H1 (cell line): ENCODE measurements at regions of chr7 and their contacts with region 1.

Region 1: DNA sequence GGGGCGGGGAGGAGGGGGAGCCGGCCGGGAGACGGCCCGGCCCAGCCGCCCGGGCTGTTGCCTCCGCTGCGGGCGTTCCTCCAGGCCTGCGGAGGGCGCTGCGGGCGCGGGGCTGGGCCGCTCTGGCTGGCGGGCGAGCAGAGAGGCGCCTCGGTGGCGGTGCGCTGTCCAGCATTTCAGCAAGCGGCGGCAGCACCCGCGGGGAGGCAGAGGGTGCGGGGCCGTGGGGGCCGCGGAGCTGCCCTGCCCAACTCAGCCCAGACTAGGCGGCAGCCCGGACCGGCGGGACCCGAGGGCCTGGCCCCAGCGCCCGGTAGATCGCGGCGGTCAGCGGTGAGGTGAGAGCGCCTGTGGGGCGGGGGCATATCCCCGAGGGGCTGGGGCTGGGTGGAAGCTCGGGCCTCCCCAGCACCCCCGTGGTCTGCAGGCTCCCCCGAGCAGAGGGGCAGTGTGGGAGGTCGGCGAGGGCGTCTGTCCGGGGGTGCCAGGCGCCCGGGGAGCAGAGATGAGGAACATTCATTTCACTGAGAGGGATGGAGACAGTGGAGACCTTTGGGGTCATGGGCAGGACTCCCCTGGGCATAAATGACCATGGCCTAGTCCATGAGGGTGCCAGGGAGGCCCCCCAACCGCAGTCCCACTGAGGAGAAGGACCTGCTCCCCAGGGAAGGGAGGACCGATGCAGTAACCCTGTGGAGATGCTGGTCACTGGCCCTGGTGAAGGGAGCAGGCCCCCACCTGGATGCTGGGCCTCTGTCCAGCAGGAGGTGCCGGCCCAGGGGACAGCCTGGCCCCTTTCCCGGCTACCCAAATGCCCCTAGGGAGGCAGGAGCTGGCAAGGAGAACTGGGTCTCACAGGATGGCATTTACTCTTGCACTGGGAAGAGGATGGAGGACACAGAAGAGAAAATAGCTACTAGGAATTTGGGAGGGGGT is at the start of gene SRRM3:
- DNase-seq: peak in 1 of 2 experiments; percentile 98
- H3K4me3 ChIP-seq: peak within 1 kb of the TSS; percentile 26 to 71 (median 46)
- H3K27ac ChIP-seq: no peak within 1 kb of the TSS
- H3K4me1 ChIP-seq: peaks cover 0 to 8% (median 6%) of the 10 kb centered on the region in 4 experiments; a peak in 5 of 7 replicates
- H3K27me3 ChIP-seq: 0 out of 7 replicates have a peak, but pooled peaks cover 0 to 2% (median 0%) of the 10 kb centered on the region in 4 experiments
- CTCF ChIP-seq: peak; percentile 80 to 89 (median 87)
- EP300 ChIP-seq: peak in 1 of 2 experiments; percentile 83; a peak in 1 of 3 replicates
- POLR2A ChIP-seq: no peak
- RAD21 ChIP-seq: peak; percentile 25 to 57; a peak in 3 of 4 replicates
- total RNA-seq, gene SRRM3: 16.0 and 17.4 TPM in 2 replicates

Region 2: DNA sequence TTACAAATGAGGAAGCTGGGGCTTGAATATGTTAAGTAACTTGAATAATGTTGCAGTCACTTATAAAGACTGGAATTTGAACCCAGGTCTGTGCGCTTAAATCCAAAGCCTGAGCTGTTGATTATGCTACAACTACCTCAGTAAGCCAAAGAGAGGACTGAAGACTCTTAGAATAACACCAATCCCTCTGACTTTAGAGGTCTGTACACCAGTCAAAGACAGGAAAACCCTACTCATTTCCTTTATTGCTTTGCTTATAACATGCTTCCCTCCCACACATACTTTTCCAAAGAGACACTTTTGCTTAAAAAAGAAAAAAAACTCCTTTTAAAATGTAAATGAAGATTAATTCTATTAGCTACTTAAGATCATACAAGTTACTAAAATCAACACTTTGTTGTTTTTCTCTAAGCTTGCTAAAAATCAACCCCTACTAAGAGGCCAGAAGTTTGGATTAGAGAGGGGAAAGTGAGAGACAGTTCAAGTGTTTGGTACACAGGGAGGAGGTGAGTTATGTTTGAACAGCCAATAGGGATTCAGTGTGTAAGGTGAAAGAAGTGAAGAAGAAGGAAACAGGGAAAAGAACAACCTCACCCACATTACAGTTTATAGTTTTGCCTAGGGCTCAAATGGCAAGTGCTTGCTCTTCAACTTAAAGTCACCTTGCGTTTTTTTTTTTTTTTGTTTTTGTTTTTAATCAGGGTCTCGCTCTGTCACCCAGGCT is 79.3 kb before region 1 on chr7:
- CTCF ChIA-PET with region 1: no interaction called
- POLR2A ChIA-PET with region 1: no interaction called
- DNase-seq: no peak
- H3K4me3 ChIP-seq: no peak overlapping the region
- H3K27ac ChIP-seq: no peak overlapping the region
- H3K4me1 ChIP-seq: no peaks in the 10 kb centered on the region
- H3K27me3 ChIP-seq: no peaks in the 10 kb centered on the region
- CTCF ChIP-seq: no peak
- EP300 ChIP-seq: no peak
- POLR2A ChIP-seq: no peak
- RAD21 ChIP-seq: no peak

Region 3: GRCh38 chr7:76191783-76192275 is 10.2 kb before region 1 on chr7:
- CTCF ChIA-PET with region 1: interaction called, 50 read pairs
- POLR2A ChIA-PET with region 1: interaction called, 3 read pairs
- DNase-seq: peak; percentile 34 to 71
- H3K4me3 ChIP-seq: no peak overlapping the region
- H3K27ac ChIP-seq: no peak overlapping the region
- H3K4me1 ChIP-seq: peaks cover 0 to 7% (median 4%) of the 10 kb centered on the region in 4 experiments; a peak in 5 of 7 replicates
- H3K27me3 ChIP-seq: no peaks in the 10 kb centered on the region
- CTCF ChIP-seq: no peak
- EP300 ChIP-seq: no peak
- POLR2A ChIP-seq: peak in 1 of 2 experiments; percentile 46; a peak in 1 of 3 replicates
- RAD21 ChIP-seq: no peak

Region 4: DNA sequence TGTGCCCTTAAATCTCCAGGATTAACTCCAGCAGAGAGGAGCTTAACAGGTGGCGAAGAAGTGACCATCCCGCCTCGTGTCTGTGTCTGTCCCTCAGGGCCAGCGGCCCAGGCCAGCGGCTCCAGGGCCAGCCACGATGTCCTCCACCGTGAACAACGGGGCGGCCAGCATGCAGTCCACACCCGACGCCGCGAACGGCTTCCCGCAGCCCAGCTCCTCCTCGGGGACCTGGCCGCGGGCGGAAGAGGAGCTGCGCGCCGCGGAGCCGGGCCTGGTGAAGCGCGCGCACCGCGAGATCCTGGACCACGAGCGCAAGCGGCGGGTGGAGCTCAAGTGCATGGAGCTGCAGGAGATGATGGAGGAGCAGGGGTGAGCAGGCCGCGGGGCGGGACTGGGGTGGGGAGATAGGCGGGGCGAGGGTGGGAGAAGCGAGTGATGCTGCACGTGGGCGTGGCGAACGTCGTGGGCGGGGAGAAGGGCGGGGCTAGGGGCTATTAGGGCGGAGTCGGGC is 33.0 kb after region 1 on chr7:
- CTCF ChIA-PET with region 1: interaction called, 33 read pairs
- POLR2A ChIA-PET with region 1: interaction called, 5 read pairs
- DNase-seq: peak; percentile 79 to 99
- H3K4me3 ChIP-seq: peak overlapping the region; percentile 38 to 67 (median 47)
- H3K27ac ChIP-seq: peak overlapping the region; percentile 37; the same call in 1 of the 2 replicates
- H3K4me1 ChIP-seq: peaks cover 6 to 41% (median 27%) of the 10 kb centered on the region in 4 experiments
- H3K27me3 ChIP-seq: no peaks in the 10 kb centered on the region; a peak in 1 of 7 replicates
- CTCF ChIP-seq: peak in 1 of 3 experiments; percentile 11; a peak in 1 of 4 replicates
- EP300 ChIP-seq: no peak
- POLR2A ChIP-seq: 0 out of 3 replicates have a peak, but pooled peaks of 1 of the 2 experiments have one; percentile 20
- RAD21 ChIP-seq: no peak

Region 5: DNA sequence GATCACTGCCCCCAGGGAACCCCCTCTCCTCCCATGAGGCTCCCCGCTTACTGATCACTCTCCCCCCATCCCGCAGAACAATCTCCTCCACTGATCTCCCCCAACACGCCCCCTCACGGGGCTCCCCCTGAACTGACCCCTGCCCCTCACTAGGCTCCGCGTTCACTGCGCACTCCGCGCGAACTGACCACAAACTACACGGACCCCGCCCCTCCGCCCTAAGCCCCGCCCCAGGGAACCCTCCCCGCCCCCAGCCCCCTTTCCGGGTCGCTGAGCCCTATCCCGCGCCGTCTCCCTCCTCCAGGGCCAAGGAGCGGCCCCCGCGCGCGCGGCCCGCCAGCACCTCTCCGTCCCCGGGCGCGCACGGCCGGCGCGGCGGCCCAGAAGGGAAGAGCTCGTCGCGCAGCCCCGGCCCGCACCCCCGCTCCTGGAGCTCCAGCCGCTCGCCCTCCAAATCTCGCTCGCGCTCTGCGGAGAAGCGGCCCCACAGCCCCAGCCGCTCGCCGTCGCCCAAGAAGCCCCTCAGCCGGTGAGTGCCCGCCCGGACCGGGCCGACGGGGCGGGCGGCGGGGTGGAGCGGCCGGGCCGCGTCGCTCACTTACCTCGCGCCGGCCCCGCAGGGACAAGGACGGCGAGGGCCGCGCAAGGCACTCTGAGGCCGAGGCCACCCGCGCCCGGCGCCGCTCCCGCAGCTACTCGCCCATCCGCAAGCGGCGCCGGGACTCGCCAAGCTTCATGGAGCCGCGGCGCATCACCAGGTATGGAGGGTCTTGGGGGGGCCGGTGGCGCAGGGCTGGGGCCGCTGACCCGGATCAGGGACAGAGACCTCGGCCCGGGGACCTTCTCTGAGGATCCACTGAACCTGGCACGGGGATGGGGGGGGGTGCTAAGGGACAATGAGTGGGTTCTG is 80.6 kb after region 1 on chr7:
- CTCF ChIA-PET with region 1: interaction called, 15 read pairs
- POLR2A ChIA-PET with region 1: no interaction called
- DNase-seq: peak in 1 of 2 experiments; percentile 84
- H3K4me3 ChIP-seq: peak overlapping the region; percentile 49 to 95 (median 58)
- H3K27ac ChIP-seq: no peak overlapping the region
- H3K4me1 ChIP-seq: peaks cover 0 to 13% (median 7%) of the 10 kb centered on the region in 4 experiments; a peak in 5 of 7 replicates
- H3K27me3 ChIP-seq: peaks cover 8 to 31% (median 17%) of the 10 kb centered on the region in 4 experiments
- CTCF ChIP-seq: no peak
- EP300 ChIP-seq: no peak
- POLR2A ChIP-seq: no peak
- RAD21 ChIP-seq: no peak